Activated naive CD4-positive, alpha-beta T cell treated with anti-CD3 and anti-CD28 coated beads, Interleukin-2, amount 10 ng/mL, durations not matched to agents 7 days and 5 days (primary cell): ENCODE measurements at regions of chr12 and their contacts with region 1.

Region 1: DNA sequence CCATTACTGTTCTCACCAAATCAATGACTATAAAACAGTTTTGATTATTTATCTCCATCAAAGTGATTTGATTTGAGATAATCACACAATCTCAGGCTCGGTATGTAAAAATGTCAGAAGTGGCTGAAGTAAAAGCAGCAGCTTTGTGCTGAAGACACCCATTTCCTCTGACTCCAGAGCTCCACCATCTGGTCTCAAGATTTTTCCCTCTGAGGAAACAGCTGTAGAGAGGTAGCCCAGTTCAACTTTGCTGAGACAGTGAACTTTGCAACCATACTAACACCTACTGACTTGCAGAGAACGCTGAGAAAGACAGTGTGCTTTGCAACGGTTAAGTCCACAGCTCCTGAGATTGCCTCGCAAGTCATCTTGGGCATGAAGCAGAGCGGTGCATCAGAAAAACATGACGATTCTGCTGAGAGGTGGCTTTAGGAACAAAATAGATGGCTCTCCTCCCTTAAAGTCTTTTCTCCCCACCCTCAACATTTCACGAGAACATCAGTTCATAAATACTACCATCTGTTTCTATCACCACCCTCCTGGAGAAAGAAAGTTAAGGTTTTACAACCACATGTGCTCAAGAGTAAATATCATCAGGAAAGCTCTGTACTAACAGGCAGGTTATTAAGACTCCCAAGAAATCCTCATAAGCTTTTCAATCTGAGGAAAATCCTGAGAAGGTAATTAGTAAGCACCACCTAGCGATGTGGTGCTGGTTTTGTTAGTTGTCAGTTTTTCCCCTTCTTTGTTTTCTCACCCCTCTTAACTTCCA is 34.8 kb downstream of the HIGD1C start:
- DNase-seq: peak; percentile 54
- H3K4me3 Mint-ChIP-seq: no peak overlapping the region
- H3K27ac Mint-ChIP-seq: no peak overlapping the region
- H3K4me1 Mint-ChIP-seq: peaks cover 8% of the 10 kb centered on the region
- H3K27me3 Mint-ChIP-seq: no peaks in the 10 kb centered on the region

Region 2: GRCh38 chr12:50763639-50764285 is 223.4 kb before region 1 on chr12 and contains the start of gene ATF1:
- CTCF ChIA-PET with region 1: interaction called, 52 read pairs
- DNase-seq: peak; percentile 92
- H3K4me3 Mint-ChIP-seq: peak within 1 kb of the TSS; percentile 91
- H3K27ac Mint-ChIP-seq: peak within 1 kb of the TSS; percentile 97
- H3K4me1 Mint-ChIP-seq: peaks cover 45% of the 10 kb centered on the region
- H3K27me3 Mint-ChIP-seq: peaks cover 5% of the 10 kb centered on the region

Region 3: DNA sequence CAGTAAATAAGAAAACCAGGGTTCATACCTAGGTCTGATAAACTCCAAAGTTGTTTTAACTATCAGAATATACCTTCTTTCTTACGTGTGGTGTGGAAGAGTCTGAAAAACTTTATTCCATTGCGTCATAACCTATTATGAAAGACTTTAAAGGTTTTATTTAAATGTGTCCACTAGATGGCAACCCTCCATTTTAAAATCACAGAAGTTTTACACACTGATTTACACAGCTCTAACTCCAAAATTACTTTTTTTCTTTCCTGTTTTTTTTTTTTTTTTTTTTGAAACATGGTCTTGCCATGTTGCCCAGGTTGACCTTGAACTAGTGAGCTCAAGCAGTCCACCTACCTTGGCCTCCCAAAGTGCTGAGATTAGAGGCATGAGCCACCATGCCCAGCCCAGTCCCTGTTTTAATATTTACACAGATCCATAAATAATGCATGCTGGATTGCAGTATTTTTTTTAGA is 161.7 kb before region 1 on chr12:
- CTCF ChIA-PET with region 1: interaction called, 45 read pairs
- DNase-seq: no peak
- H3K4me3 Mint-ChIP-seq: no peak overlapping the region
- H3K27ac Mint-ChIP-seq: peak overlapping the region; percentile 54
- H3K4me1 Mint-ChIP-seq: peaks cover 5% of the 10 kb centered on the region
- H3K27me3 Mint-ChIP-seq: peaks cover 11% of the 10 kb centered on the region

Region 4: DNA sequence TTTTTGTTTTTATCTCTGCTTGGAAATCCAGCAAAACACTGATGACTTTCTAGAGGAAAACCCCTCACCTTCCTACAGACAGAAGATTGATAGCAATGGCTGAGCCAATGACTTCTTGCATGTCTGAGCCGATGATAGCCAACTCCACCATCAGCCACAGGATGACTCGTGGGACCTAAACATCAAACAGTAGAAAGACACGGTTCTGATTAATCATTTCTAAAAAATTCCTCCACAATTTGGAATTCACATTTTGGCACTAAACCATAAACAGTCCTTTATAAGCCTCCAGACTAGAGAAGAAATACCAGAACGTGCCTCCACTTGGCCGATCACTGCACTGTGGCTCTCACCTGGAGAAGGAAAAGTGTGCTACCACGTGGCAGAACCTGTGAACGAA is 13.1 kb after region 1 on chr12:
- CTCF ChIA-PET with region 1: interaction called, 11 read pairs
- DNase-seq: no peak
- H3K4me3 Mint-ChIP-seq: no peak overlapping the region
- H3K27ac Mint-ChIP-seq: no peak overlapping the region
- H3K4me1 Mint-ChIP-seq: no peaks in the 10 kb centered on the region
- H3K27me3 Mint-ChIP-seq: no peaks in the 10 kb centered on the region

Region 5: GRCh38 chr12:51009056-51009440 is 21.9 kb after region 1 on chr12:
- CTCF ChIA-PET with region 1: interaction called, 14 read pairs
- DNase-seq: peak; percentile 75
- H3K4me3 Mint-ChIP-seq: peak overlapping the region; percentile 39
- H3K27ac Mint-ChIP-seq: peak overlapping the region; percentile 75
- H3K4me1 Mint-ChIP-seq: peaks cover 36% of the 10 kb centered on the region
- H3K27me3 Mint-ChIP-seq: no peaks in the 10 kb centered on the region